ENCODE measurements at regions of chr18 and their contacts with region 1.

Region 1: GRCh38 chr18:70195852-70196434 is 9.5 kb downstream of the RTTN start:
- DNase-seq: peak; percentile 32
- ATAC-seq: no peak
- H3K4me3 ChIP-seq: no peak overlapping the region
- H3K4me3 Mint-ChIP-seq: no peak overlapping the region
- H3K27ac ChIP-seq: no peak overlapping the region
- H3K27ac Mint-ChIP-seq: no peak overlapping the region
- H3K4me1 ChIP-seq: no peaks in the 10 kb centered on the region
- H3K4me1 Mint-ChIP-seq: peaks cover 9% of the 10 kb centered on the region
- H3K27me3 ChIP-seq: no peaks in the 10 kb centered on the region
- H3K27me3 Mint-ChIP-seq: no peaks in the 10 kb centered on the region
- CTCF ChIP-seq: peak; percentile 76

Region 2: DNA sequence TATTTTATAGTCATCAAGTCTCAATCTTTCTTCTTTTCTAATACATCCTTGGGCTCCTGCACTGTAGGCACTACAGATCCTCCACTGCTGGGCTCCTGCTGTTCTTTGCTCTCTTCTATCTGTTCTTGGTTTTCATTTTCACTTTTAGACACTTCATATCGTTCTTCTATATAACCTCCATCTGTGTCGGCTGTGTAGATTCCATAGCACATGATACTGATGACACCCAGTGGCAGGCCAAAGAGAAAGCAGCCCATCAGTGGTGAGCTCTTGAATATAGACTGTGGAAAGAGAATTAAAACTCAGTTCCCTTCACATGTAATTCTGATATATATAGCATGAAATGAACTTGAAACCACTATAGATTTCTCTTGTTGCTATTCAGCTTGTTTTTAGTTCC is 1519.0 kb before region 1 on chr18:
- CTCF ChIA-PET with region 1: no interaction called
- POLR2A ChIA-PET with region 1: no interaction called
- intact Hi-C with region 1: no loop called
- DNase-seq: no peak
- ATAC-seq: no peak
- H3K4me3 ChIP-seq: no peak overlapping the region
- H3K4me3 Mint-ChIP-seq: no peak overlapping the region
- H3K27ac ChIP-seq: no peak overlapping the region
- H3K27ac Mint-ChIP-seq: no peak overlapping the region
- H3K4me1 ChIP-seq: no peaks in the 10 kb centered on the region
- H3K4me1 Mint-ChIP-seq: no peaks in the 10 kb centered on the region
- H3K27me3 ChIP-seq: no peaks in the 10 kb centered on the region
- H3K27me3 Mint-ChIP-seq: no peaks in the 10 kb centered on the region
- CTCF ChIP-seq: no peak

Region 3: DNA sequence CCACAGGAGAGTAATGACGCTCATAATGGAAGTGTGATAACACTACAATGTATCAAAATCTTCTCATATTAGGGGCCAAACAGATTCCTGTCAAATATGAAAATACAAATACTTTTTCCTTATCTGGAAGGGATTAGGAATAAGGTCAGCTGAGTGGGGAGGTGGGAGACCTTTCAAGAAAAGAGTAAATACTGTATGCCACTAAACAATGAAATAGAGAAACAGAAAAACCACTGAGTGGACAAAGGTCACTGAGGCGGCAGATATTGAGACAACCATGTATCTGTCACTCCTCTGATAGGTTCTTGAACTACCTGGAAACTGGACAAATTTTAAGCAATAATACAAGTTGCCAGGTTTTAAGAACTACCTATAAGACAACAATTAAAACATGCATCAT is 49.8 kb before region 1 on chr18:
- CTCF ChIA-PET with region 1: no interaction called
- POLR2A ChIA-PET with region 1: no interaction called
- intact Hi-C with region 1: no loop called
- DNase-seq: no peak
- ATAC-seq: no peak
- H3K4me3 ChIP-seq: no peak overlapping the region
- H3K4me3 Mint-ChIP-seq: no peak overlapping the region
- H3K27ac ChIP-seq: no peak overlapping the region
- H3K27ac Mint-ChIP-seq: no peak overlapping the region
- H3K4me1 ChIP-seq: no peaks in the 10 kb centered on the region
- H3K4me1 Mint-ChIP-seq: no peaks in the 10 kb centered on the region
- H3K27me3 ChIP-seq: no peaks in the 10 kb centered on the region
- H3K27me3 Mint-ChIP-seq: no peaks in the 10 kb centered on the region
- CTCF ChIP-seq: no peak

Region 4: DNA sequence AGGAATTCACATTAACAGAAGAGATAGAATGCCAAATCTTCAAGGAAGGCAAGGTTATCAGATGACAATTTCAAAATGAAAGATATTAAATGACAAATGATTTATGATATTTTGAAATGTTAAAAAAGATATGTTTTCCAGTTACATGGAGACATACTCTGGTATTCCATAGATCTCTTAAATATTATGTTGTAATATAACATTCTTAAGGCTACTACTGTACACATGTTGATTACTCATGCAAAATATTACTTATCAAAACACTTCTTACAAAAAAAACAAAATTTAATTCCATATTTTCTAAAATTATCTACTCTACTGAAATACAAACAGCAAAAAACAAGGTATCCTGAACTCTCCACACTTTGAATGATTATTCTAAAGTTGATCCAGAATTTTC is 13.4 kb before region 1 on chr18:
- CTCF ChIA-PET with region 1: interaction called, 14 read pairs
- POLR2A ChIA-PET with region 1: no interaction called
- intact Hi-C with region 1: no loop called
- DNase-seq: no peak
- ATAC-seq: no peak
- H3K4me3 ChIP-seq: no peak overlapping the region
- H3K4me3 Mint-ChIP-seq: no peak overlapping the region
- H3K27ac ChIP-seq: no peak overlapping the region
- H3K27ac Mint-ChIP-seq: no peak overlapping the region
- H3K4me1 ChIP-seq: no peaks in the 10 kb centered on the region
- H3K4me1 Mint-ChIP-seq: no peaks in the 10 kb centered on the region
- H3K27me3 ChIP-seq: no peaks in the 10 kb centered on the region
- H3K27me3 Mint-ChIP-seq: no peaks in the 10 kb centered on the region
- CTCF ChIP-seq: no peak

Region 5: GRCh38 chr18:70279470-70279869 is 83.5 kb after region 1 on chr18:
- CTCF ChIA-PET with region 1: no interaction called
- POLR2A ChIA-PET with region 1: no interaction called
- intact Hi-C with region 1: no loop called
- DNase-seq: no peak
- ATAC-seq: no peak
- H3K4me3 ChIP-seq: no peak overlapping the region
- H3K4me3 Mint-ChIP-seq: no peak overlapping the region
- H3K27ac ChIP-seq: no peak overlapping the region
- H3K27ac Mint-ChIP-seq: no peak overlapping the region
- H3K4me1 ChIP-seq: no peaks in the 10 kb centered on the region
- H3K4me1 Mint-ChIP-seq: no peaks in the 10 kb centered on the region
- H3K27me3 ChIP-seq: no peaks in the 10 kb centered on the region
- H3K27me3 Mint-ChIP-seq: peaks cover 12% of the 10 kb centered on the region
- CTCF ChIP-seq: no peak

Region 6: DNA sequence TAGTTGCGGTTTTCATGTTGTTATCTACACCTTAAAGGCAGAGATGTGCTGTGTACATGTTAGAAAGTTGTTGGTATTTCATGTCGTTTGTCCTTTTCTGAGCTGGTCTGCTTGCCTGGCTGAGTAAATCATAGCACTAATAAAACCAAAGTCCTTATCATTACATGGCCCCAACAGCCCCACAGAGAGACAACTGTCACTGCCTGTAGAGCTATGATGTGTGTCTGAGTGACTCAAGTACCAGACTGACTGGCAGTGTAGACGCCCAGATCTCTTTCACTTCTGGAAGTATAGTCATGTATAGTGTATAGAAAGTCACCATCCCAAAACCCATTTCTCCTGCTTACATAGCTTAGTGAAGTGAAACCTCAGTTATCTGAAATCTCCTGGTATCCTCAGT is 97.2 kb after region 1 on chr18:
- CTCF ChIA-PET with region 1: no interaction called
- POLR2A ChIA-PET with region 1: no interaction called
- intact Hi-C with region 1: no loop called
- DNase-seq: no peak
- ATAC-seq: no peak
- H3K4me3 ChIP-seq: no peak overlapping the region
- H3K4me3 Mint-ChIP-seq: no peak overlapping the region
- H3K27ac ChIP-seq: no peak overlapping the region
- H3K27ac Mint-ChIP-seq: no peak overlapping the region
- H3K4me1 ChIP-seq: peaks cover 5 to 9% of the 10 kb centered on the region in 2 donors
- H3K4me1 Mint-ChIP-seq: peaks cover 11% of the 10 kb centered on the region
- H3K27me3 ChIP-seq: peaks cover 0 to 7% (median 6%) of the 10 kb centered on the region in 4 experiments
- H3K27me3 Mint-ChIP-seq: peaks cover 26% of the 10 kb centered on the region
- CTCF ChIP-seq: no peak

Region 7: DNA sequence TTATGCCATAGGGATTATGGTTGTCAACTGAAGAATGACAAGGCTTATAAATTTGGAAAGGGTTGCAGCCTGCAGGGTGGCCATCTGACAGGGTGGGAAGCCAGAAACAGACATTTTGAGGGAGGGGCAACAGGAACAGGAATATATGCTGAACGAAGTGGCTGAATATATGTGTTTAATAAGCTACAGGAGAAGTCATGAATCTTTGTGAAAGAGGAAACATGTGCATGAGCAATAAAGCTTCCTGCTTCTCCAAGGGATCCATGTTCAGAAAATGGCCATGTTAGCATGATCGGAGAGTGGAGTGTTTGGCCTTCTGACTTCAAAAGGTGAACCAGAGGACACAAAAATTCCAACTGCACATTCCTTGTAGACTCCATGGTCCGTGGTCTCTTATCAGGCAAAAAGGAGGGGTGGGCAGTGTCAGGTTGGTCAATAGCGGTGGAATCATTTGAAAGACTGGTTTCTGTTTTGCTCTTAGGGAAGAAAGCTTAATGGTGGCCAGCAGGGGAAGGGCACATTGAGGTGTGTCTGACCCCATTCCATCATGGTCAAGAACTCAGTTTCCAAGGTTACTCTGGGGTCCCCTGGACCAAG is 237.0 kb after region 1 on chr18:
- CTCF ChIA-PET with region 1: interaction called, 38 read pairs
- POLR2A ChIA-PET with region 1: no interaction called
- intact Hi-C with region 1: no loop called
- DNase-seq: no peak
- ATAC-seq: no peak
- H3K4me3 ChIP-seq: no peak overlapping the region
- H3K4me3 Mint-ChIP-seq: no peak overlapping the region
- H3K27ac ChIP-seq: no peak overlapping the region
- H3K27ac Mint-ChIP-seq: no peak overlapping the region
- H3K4me1 ChIP-seq: no peaks in the 10 kb centered on the region
- H3K4me1 Mint-ChIP-seq: peaks cover 3% of the 10 kb centered on the region
- H3K27me3 ChIP-seq: peaks cover 0 to 4% (median 0%) of the 10 kb centered on the region in 4 experiments
- H3K27me3 Mint-ChIP-seq: no peaks in the 10 kb centered on the region
- CTCF ChIP-seq: no peak